ENCODE measurements at regions of chr16 and their contacts with region 1.

Region 1: DNA sequence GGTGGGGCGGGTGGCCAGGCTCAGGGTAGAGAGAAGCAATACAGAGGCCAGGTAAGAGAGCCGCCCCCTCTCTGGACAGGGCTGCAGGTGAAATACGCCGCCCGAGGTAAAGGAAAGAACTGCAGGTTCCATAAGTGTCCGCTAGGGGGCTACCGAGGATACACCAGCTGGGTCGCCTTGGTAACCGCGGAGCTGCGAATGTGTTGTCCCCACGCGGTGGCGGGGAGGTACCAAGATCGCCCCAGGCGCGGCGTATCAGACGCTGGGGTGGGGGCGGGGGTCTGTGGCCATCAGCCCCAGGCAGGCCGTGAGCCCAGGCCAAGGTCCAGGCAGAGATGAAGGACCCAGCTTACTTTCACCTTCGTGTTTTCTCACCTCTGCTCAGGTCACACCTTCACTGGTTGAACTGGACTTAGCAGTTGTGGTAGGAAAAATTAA is 18.4 kb upstream of the ZFP90 start:
- DNase-seq: peak; percentile 78 to 93
- H3K4me3 ChIP-seq: no peak overlapping the region; the same call in 1 of the 2 replicates
- H3K4me1 ChIP-seq: peaks cover 2% of the 10 kb centered on the region; the same call in 1 of the 2 replicates
- H3K27me3 ChIP-seq: no peaks in the 10 kb centered on the region

Region 2: GRCh38 chr16:68247400-68247799 is 273.3 kb before region 1 on chr16:
- in situ Hi-C with region 1: no loop called
- DNase-seq: no peak
- H3K4me3 ChIP-seq: no peak overlapping the region
- H3K4me1 ChIP-seq: peaks cover 11% of the 10 kb centered on the region
- H3K27me3 ChIP-seq: no peaks in the 10 kb centered on the region

Region 3: GRCh38 chr16:68396481-68396880 is 124.2 kb before region 1 on chr16:
- in situ Hi-C with region 1: loop called (anchors 25 kb)
- DNase-seq: peak; percentile 51 to 74
- H3K4me3 ChIP-seq: no peak overlapping the region
- H3K4me1 ChIP-seq: no peaks in the 10 kb centered on the region; the same call in 1 of the 2 replicates
- H3K27me3 ChIP-seq: no peaks in the 10 kb centered on the region

Region 4: GRCh38 chr16:69150146-69150865 is 629.6 kb after region 1 on chr16:
- in situ Hi-C with region 1: no loop called
- DNase-seq: peak; percentile 63 to 76
- H3K4me3 ChIP-seq: no peak overlapping the region
- H3K4me1 ChIP-seq: no peaks in the 10 kb centered on the region
- H3K27me3 ChIP-seq: no peaks in the 10 kb centered on the region